Mammary epithelial cell (primary cell): ENCODE measurements at regions of chr4 and their contacts with region 1.

Region 1: DNA sequence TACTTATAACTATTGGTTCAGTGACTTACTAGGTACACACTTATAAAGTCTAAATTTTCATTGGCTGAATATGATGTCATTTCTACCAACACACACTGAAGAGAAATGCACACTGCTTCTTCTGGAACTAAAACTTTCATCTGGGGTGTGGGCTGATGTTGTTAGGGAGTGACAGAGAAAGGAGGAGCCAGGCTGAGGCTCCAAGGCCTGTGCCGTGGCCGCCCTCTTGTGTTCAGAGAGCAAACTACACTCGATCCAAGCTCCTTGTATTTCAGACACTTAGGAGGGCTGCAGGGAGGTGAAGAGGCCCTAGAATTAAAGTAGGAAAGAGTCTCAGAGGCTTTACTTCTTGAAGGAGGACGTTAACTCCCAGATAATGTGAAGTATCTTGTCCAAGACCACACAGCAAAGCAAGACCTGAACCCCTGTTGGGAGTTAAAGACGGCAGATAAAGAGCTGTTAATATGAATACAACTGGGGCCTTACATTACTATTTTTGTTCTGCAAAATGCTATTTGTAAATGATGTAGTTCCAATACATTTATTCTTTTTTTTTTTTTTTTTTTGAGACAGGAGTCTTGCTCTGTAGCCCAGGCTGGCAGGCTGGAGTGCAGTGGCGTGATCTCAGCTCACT is 137.5 kb downstream of the AFAP1 start:
- DNase-seq: peak; percentile 60
- H3K4me3 ChIP-seq: no peak overlapping the region
- H3K27ac ChIP-seq: no peak overlapping the region
- H3K4me1 ChIP-seq: peaks cover 22% of the 10 kb centered on the region
- H3K27me3 ChIP-seq: no peaks in the 10 kb centered on the region
- CTCF ChIP-seq: peak; percentile 87

Region 2: GRCh38 chr4:7827991-7828720 is 25.9 kb after region 1 on chr4:
- CTCF ChIA-PET with region 1: no interaction called
- dilution Hi-C with region 1: no loop called
- in situ Hi-C with region 1: no loop called
- intact Hi-C with region 1: loop called (anchors 2 kb)
- DNase-seq: peak; percentile 96
- H3K4me3 ChIP-seq: peak overlapping the region in 1 of 3 experiments; percentile 1
- H3K27ac ChIP-seq: peak overlapping the region; percentile 73
- H3K4me1 ChIP-seq: peaks cover 22% of the 10 kb centered on the region
- H3K27me3 ChIP-seq: no peaks in the 10 kb centered on the region
- CTCF ChIP-seq: no peak

Region 3: GRCh38 chr4:7861440-7861881 is 59.3 kb after region 1 on chr4:
- CTCF ChIA-PET with region 1: interaction called, 3 read pairs
- dilution Hi-C with region 1: no loop called
- in situ Hi-C with region 1: no loop called
- intact Hi-C with region 1: loop called (anchors 2 kb)
- DNase-seq: peak; percentile 80
- H3K4me3 ChIP-seq: no peak overlapping the region
- H3K27ac ChIP-seq: peak overlapping the region; percentile 82
- H3K4me1 ChIP-seq: peaks cover 44% of the 10 kb centered on the region
- H3K27me3 ChIP-seq: no peaks in the 10 kb centered on the region
- CTCF ChIP-seq: no peak

Region 4: DNA sequence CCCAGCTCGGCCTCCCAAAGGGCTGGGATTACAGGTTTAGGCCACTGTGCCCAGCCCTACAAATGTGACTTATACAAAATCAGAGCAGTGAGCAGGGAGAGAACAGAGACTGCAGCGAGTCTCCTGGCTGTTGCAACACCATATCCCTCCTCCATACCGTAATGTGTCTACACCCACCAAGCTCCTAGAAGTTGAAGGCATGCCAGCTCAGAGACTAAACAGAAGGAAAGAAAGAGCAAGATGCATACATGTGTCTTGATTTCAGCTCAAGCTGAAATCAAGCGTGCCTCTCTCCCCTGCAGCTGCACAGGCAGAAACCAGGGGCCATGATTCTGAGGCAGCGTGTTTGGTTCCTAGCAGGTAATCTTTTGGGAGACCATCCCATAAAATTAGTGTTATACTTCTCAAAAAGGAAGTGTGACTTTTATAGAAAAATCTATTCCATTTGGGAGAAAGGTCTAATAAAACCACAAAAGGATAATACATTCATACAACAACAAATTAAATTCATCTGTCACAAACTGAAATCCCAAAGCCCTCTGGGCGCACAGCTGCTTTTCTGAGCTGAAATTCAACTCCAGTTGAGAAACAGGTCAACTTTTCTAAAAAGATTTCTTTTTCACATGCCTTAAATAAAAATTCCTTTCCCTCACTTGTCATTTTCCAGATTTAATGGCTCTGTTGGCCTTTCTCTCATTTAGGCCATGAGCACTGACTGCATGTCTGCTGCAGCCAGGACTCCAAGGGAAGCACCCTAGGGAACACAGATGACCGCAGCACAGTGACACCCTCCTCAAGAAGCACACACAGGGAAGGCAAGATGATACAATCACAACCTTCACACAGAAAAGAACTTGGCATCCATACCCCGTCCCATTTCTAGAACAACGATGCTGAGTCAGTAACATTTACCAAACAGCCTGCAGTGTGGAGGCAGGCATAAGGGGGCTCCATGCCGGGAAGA is 103.0 kb after region 1 on chr4:
- CTCF ChIA-PET with region 1: no interaction called
- dilution Hi-C with region 1: no loop called
- in situ Hi-C with region 1: no loop called
- intact Hi-C with region 1: no loop called
- DNase-seq: peak; percentile 60
- H3K4me3 ChIP-seq: no peak overlapping the region
- H3K27ac ChIP-seq: peak overlapping the region; percentile 4
- H3K4me1 ChIP-seq: peaks cover 33% of the 10 kb centered on the region
- H3K27me3 ChIP-seq: no peaks in the 10 kb centered on the region
- CTCF ChIP-seq: no peak

Region 5: DNA sequence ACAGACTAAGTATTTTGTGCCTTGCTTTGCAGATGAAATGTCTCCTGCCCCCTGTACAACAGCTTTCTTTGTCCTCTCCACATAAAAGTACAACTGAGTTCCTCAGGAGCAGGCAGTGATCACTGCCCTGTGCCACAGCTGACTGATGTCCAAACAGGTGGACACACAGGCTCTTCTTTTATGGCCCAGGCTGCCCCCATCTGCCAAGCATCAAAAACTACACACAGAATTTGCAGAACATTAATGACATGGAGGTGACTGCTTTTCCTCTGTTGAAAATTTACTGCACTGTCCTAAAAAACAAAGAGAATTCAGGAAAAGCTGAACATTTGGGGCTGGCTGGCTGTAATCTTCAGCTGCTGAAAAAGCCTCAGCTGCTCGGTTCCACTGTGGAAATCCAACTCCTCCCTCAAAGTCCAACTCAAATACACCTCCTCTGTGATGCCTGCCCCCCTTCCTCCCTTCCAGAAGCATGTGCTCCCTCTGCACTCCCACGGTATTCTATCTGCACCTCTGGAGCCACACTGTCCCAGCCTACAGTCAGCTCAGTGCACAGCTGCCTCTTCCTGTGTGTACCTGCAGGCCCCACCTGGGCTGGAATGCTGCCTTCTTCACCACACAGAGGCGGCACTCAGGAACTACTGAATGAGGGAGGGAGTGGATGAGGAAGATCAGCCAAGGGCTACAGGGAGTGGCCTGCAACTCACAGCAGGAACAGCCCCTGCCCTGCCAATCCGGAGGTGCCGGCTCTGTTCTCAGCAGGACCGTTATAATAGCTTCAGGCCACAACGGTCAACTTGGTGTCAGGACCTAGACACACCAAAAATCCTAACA is 127.1 kb after region 1 on chr4:
- CTCF ChIA-PET with region 1: interaction called, 7 read pairs
- dilution Hi-C with region 1: no loop called
- in situ Hi-C with region 1: loop called in 1 of 2 experiments (anchors 5 kb)
- intact Hi-C with region 1: loop called (anchors 1 kb)
- DNase-seq: peak; percentile 90
- H3K4me3 ChIP-seq: no peak overlapping the region
- H3K27ac ChIP-seq: peak overlapping the region; percentile 33
- H3K4me1 ChIP-seq: peaks cover 33% of the 10 kb centered on the region
- H3K27me3 ChIP-seq: no peaks in the 10 kb centered on the region
- CTCF ChIP-seq: peak in 1 of 2 donors; percentile 56

Region 6: DNA sequence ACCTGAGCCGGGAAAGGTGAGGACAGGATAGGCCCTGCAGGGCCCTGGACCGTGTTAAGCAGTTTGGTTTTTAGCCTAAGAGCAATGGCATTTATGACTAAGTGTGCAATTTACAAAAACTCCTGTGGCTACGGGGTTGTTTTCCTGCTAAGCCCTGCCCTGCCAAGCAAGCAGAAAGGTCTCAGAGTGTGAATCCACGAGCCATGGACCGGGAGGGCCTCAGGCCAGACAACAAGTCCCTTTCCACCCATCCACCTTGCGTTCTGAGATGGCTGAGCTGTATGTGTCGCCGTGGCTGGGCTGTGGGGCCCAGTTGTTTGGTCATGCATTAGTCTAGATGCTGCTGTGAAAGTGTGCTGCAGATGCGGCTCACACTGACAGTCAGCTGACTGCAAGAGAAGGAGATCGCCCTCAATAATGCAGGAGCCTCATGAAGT is 171.4 kb after region 1 on chr4:
- CTCF ChIA-PET with region 1: interaction called, 29 read pairs
- dilution Hi-C with region 1: no loop called
- in situ Hi-C with region 1: no loop called
- intact Hi-C with region 1: no loop called
- DNase-seq: peak; percentile 90
- H3K4me3 ChIP-seq: no peak overlapping the region
- H3K27ac ChIP-seq: peak overlapping the region; percentile 77
- H3K4me1 ChIP-seq: peaks cover 48% of the 10 kb centered on the region
- H3K27me3 ChIP-seq: no peaks in the 10 kb centered on the region
- CTCF ChIP-seq: no peak

Region 7: GRCh38 chr4:8410641-8411271 is 608.5 kb after region 1 on chr4:
- CTCF ChIA-PET with region 1: interaction called, 13 read pairs
- dilution Hi-C with region 1: no loop called
- in situ Hi-C with region 1: no loop called
- intact Hi-C with region 1: no loop called
- DNase-seq: peak; percentile 33
- H3K4me3 ChIP-seq: no peak overlapping the region
- H3K27ac ChIP-seq: no peak overlapping the region
- H3K4me1 ChIP-seq: peaks cover 5% of the 10 kb centered on the region
- H3K27me3 ChIP-seq: no peaks in the 10 kb centered on the region
- CTCF ChIP-seq: peak in 1 of 2 donors; percentile 13